ENCODE measurements at regions of chr2 and their contacts with region 1.

Region 1: GRCh38 chr2:177332041-177332991 is 60.3 kb upstream of the AGPS start:
- DNase-seq: peak; percentile 45
- H3K4me3 Mint-ChIP-seq: no peak overlapping the region
- H3K27ac Mint-ChIP-seq: no peak overlapping the region
- H3K4me1 Mint-ChIP-seq: peaks cover 16% of the 10 kb centered on the region
- H3K27me3 Mint-ChIP-seq: no peaks in the 10 kb centered on the region

Region 2: GRCh38 chr2:177254433-177255226 is 77.7 kb before region 1 on chr2:
- intact Hi-C with region 1: no loop called
- DNase-seq: no peak
- H3K4me3 Mint-ChIP-seq: no peak overlapping the region
- H3K27ac Mint-ChIP-seq: peak overlapping the region; percentile 18
- H3K4me1 Mint-ChIP-seq: peaks cover 91% of the 10 kb centered on the region
- H3K27me3 Mint-ChIP-seq: no peaks in the 10 kb centered on the region

Region 3: GRCh38 chr2:177296040-177296439 is 36.3 kb before region 1 on chr2:
- intact Hi-C with region 1: loop called (anchors 2 kb)
- DNase-seq: no peak
- H3K4me3 Mint-ChIP-seq: no peak overlapping the region
- H3K27ac Mint-ChIP-seq: peak overlapping the region; percentile 1
- H3K4me1 Mint-ChIP-seq: peaks cover 47% of the 10 kb centered on the region
- H3K27me3 Mint-ChIP-seq: peaks cover 2% of the 10 kb centered on the region

Region 4: GRCh38 chr2:177419274-177419673 is 87.0 kb after region 1 on chr2:
- intact Hi-C with region 1: loop called (anchors 1 kb)
- DNase-seq: no peak
- H3K4me3 Mint-ChIP-seq: no peak overlapping the region
- H3K27ac Mint-ChIP-seq: no peak overlapping the region
- H3K4me1 Mint-ChIP-seq: peaks cover 20% of the 10 kb centered on the region
- H3K27me3 Mint-ChIP-seq: no peaks in the 10 kb centered on the region

Region 5: DNA sequence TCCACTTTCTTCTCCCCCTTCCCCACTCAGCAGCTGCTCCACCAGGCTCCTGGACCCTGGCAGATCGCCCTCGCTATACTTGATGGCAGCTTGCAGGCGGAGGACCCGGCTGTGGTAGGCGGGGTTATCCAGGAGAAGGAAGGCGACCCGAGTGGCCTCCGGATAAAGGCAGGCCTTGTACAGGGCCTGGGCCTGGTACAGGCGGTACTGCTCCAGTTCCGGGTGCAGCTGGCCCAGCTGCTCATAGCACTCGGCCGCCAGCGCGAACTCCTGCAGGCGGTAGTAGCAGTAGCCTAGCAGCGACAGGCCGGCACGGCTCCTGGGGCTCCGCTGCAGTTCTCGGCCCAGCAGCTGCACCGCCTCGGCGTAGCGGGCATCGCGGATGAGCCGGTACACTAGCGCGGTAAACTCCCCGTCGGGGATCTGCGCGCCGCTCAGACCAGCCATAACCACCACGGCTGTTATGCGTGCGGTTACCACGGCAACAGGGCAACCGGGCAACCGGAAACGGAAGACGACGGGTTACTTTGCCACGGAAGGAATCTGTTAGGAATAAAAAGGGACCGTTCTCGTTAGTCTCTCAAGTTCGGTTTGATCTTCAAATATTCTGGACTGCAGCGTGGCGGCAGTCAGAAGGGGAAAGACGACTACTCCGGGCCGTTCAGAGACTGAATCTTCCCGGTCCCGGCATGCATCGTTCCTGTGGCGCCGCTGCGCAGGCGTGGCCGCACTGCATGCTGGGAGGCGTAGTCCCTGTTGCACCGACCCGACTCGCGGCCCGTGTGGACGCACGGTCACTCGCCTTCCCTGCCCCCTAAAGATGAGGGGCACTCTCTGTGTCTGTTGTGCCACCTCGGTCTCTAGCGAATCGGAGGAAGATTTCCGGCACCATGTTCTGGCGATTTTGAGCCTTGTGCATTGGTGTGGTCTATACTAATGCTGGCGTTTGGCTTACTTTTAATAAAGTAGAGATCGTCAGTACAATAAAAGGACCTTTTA is 286.2 kb after region 1 on chr2:
- intact Hi-C with region 1: loop called (anchors 5 kb)
- DNase-seq: peak; percentile 91
- H3K4me3 Mint-ChIP-seq: peak overlapping the region; percentile 94
- H3K27ac Mint-ChIP-seq: peak overlapping the region; percentile 99
- H3K4me1 Mint-ChIP-seq: peaks cover 13% of the 10 kb centered on the region
- H3K27me3 Mint-ChIP-seq: peaks cover 4% of the 10 kb centered on the region

Region 6: GRCh38 chr2:177763532-177764265 is 431.4 kb after region 1 on chr2:
- intact Hi-C with region 1: loop called (anchors 1 kb)
- DNase-seq: peak; percentile 61
- H3K4me3 Mint-ChIP-seq: no peak overlapping the region
- H3K27ac Mint-ChIP-seq: no peak overlapping the region
- H3K4me1 Mint-ChIP-seq: no peaks in the 10 kb centered on the region
- H3K27me3 Mint-ChIP-seq: peaks cover 15% of the 10 kb centered on the region